ENCODE measurements at regions of chr3 and their contacts with region 1.

Region 1: GRCh38 chr3:114418724-114419543 is 125.1 kb downstream of the TIGIT start:
- H3K4me3 ChIP-seq: no peak overlapping the region
- H3K27ac ChIP-seq: no peak overlapping the region
- H3K4me1 ChIP-seq: no peaks in the 10 kb centered on the region
- CTCF ChIP-seq: no peak

Region 2: GRCh38 chr3:114122027-114122709 is 296.8 kb before region 1 on chr3:
- CTCF ChIA-PET with region 1: no interaction called
- POLR2A ChIA-PET with region 1: no interaction called
- H3K4me3 ChIP-seq: no peak overlapping the region
- H3K27ac ChIP-seq: no peak overlapping the region
- H3K4me1 ChIP-seq: no peaks in the 10 kb centered on the region
- CTCF ChIP-seq: no peak

Region 3: DNA sequence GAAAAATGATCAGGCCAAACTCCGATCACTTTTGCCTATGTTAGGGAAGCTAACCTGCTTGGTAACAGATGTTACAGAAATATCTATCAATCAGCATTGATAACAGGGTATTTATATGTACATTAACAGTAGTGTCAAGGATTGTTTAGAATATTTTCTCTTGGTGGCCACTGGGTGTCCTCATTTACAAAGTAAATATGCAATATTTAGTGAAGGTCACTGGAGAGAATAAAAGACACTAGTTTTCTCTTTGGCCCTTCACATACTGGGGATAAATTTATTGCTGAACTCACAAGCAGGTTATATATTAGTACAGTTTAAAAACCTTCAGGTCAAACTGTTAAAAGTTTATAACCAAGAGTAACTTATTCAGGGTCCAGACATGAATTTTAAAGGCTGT is 56.1 kb before region 1 on chr3:
- CTCF ChIA-PET with region 1: interaction called, 10 read pairs
- POLR2A ChIA-PET with region 1: no interaction called
- H3K4me3 ChIP-seq: no peak overlapping the region
- H3K27ac ChIP-seq: no peak overlapping the region
- H3K4me1 ChIP-seq: no peaks in the 10 kb centered on the region
- CTCF ChIP-seq: no peak

Region 4: DNA sequence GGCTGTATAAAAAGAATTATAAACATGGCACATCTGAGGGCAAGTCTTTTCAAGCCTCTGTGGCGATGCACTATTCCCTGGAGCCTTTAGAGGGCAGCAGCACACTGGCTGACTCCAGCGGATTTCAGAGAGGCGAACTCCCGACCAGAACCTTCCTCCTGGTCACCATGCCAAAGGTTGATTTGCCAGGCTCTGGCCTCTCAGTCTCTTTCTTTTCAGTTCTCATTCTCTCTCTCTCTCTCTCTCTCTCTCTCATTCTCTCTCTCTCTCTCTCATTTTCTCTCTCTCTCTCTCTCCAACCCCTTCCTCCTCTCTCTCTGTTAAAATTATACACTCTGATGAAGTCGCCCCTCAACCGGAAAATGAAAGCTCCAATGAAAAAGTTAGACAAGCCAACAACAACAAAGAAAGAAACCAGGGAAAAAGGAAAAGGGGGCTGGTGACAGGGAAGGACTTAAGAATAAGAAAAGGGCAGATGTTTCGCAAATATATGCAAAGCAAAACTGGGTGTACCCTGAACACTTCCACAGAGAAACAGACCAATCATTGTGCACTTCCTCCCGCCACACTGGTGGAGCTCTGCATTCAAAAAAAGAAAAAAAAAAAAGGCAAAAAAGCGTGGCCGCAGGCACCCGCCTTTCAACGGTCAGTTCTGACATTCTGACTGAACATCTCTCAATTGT is 34.9 kb before region 1 on chr3:
- CTCF ChIA-PET with region 1: interaction called, 16 read pairs
- POLR2A ChIA-PET with region 1: no interaction called
- H3K4me3 ChIP-seq: no peak overlapping the region
- H3K27ac ChIP-seq: no peak overlapping the region
- H3K4me1 ChIP-seq: no peaks in the 10 kb centered on the region
- CTCF ChIP-seq: peak; percentile 30; the same call in 1 of the 2 replicates

Region 5: GRCh38 chr3:114432310-114432709 is 13.4 kb after region 1 on chr3:
- CTCF ChIA-PET with region 1: interaction called, 12 read pairs
- POLR2A ChIA-PET with region 1: no interaction called
- H3K4me3 ChIP-seq: no peak overlapping the region
- H3K27ac ChIP-seq: no peak overlapping the region
- H3K4me1 ChIP-seq: no peaks in the 10 kb centered on the region
- CTCF ChIP-seq: no peak

Region 6: GRCh38 chr3:114464548-114464947 is 45.6 kb after region 1 on chr3:
- CTCF ChIA-PET with region 1: no interaction called
- POLR2A ChIA-PET with region 1: no interaction called
- H3K4me3 ChIP-seq: no peak overlapping the region
- H3K27ac ChIP-seq: no peak overlapping the region
- H3K4me1 ChIP-seq: no peaks in the 10 kb centered on the region
- CTCF ChIP-seq: no peak

Measured in HEK293 (cell line).